Posterior vena cava (tissue), 2 donors: ENCODE measurements at regions of chr2 and their contacts with region 1.

Region 1: GRCh38 chr2:205276081-205276777 is 406.1 kb upstream of the NRP2 start:
- DNase-seq: no peak

Region 2: DNA sequence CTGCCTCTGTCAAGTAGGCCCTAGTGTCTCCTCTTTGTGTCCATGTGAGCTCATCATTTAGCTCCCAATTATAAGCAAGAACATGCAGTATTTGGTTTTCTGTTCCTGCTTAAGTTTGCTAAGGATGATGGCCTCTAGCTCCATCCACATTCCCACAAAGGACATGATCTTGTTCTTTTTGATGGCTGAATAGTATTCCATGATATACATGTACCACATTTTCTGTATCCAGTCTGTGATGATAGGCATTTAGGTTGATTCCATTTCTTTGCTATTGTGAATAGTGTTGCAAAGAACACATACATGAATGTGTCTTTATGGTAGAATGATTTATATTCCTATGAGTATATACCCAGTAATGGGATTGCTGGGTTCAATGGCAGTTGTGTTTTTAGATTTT is 467.7 kb before region 1 on chr2:
- intact Hi-C with region 1: loop called in 1 of 2 experiments (anchors 5 kb)
- DNase-seq: no peak